Posterior cingulate gyrus (tissue), 11 donors: ENCODE measurements at regions of chr7 and their contacts with region 1.

Region 1: DNA sequence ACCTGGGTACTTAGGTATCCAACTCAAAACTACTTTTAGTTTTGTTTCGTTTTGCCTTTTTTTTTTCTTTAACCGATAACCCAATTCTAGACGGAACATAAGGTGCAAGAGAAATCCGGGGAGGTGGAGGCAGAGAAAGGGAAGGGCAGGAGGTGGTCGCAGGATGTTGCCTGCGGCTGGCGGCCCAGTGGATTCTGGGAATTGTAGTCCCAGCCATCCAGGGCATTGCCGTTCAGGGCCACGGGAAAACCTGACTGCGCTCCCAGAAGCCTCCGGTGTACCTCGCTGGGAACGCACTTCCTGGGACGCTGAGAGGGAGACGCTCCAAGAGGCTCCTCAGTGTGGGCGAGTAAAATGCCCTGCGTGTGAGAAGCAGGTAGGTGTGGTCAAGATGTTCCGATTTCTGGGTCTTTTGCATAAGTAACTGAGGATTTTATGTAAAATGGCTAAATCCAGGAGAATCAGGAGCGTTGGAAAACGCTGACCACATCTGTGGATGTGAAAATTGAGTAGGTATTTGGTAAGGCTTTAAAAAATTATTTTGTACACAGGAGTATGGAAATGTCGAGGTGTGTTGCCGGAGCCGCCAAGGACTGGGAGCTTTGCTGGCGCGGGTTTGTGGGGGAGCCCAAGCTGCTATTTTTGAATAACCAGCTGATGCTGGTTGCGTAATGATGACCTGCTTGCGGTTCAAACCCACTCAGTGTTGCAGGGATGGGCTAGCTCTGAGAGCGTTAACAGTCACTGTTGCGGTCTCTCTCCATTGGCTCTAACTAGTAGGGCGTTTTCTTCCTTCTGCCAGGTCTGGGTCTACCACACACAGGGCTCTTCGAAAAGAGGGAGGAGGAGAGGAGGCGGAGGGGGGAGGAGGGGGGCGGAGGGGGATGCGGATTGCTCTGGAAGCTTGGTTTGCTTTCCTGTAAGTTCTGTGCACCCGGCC is at the start of gene CLDN12:
- DNase-seq: peak; percentile 68 to 98 (median 86)

Region 2: GRCh38 chr7:90244909-90245851 is 158.3 kb before region 1 on chr7 and contains the start of gene CFAP69:
- intact Hi-C with region 1: loop called (anchors 10 kb)
- DNase-seq: peak; percentile 85 to 98 (median 90)

Region 3: DNA sequence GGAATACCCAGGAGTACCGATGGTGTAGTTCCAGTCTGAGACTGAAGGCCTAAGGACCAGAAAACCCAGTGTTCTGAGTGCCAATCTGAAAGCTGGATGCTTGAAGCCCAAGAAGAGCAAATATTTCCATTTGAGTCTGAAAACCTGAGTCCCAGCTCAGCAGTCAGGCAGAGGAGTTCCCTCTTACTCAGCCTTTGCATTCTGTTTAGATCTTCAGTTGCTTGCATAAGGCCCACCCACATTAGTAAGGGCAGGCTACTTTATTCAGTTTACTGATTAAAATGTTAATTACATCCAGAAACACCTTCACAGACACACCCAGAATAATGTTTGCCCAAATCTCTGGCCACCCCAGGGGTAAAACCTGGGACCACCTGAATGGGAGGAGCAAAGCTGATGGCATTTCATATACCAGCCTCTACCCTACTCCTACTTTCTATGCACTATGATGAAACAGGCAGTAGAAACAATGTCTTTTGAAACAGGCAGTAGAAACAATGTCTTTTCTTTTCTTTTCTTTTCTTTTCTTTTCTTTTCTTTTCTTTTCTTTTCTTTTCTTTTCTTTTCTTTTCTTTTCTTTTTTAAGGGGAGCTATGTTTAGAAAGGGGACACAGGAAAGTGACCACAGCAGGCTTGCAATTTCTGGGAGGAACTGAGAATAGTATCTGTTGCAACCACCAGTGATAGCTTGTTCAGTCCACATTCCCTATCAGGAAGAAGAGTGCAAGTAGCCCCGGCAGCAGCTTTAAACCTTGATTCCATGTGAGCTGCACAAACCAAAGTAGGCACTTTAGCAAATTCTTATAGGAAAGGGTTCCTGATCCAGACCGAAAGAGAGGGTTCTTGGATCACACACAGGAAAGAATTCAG is 113.0 kb before region 1 on chr7:
- intact Hi-C with region 1: no loop called
- DNase-seq: peak in 1 of 10 donors; percentile 15

Region 4: GRCh38 chr7:90346336-90347125 is 56.9 kb before region 1 on chr7 and contains the start of gene GTPBP10:
- intact Hi-C with region 1: loop called (anchors 1 kb)
- DNase-seq: peak; percentile 87 to 99 (median 92)